ENCODE measurements at regions of chr19 and their contacts with region 1.

Region 1: GRCh38 chr19:1249298-1249989 is 1.1 kb downstream of the MIDN start:
- DNase-seq: peak; percentile 92 to 98
- ATAC-seq: peak; percentile 45 to 76 (median 57)
- H3K4me3 ChIP-seq: peak overlapping the region; percentile 88
- H3K4me3 Mint-ChIP-seq: peak overlapping the region; percentile 91
- H3K27ac ChIP-seq: peak overlapping the region; percentile 93
- H3K27ac Mint-ChIP-seq: peak overlapping the region; percentile 88 to 97
- H3K4me1 ChIP-seq: peaks cover 48% of the 10 kb centered on the region
- H3K4me1 Mint-ChIP-seq: peaks cover 3 to 25% of the 10 kb centered on the region in 2 donors
- H3K27me3 ChIP-seq: no peaks in the 10 kb centered on the region
- H3K27me3 Mint-ChIP-seq: no peaks in the 10 kb centered on the region
- CTCF ChIP-seq: no peak

Region 2: GRCh38 chr19:1020868-1021425 is 228.5 kb before region 1 on chr19 and contains the start of gene TMEM259:
- intact Hi-C with region 1: loop called (anchors 5 kb)
- DNase-seq: peak; percentile 97 to 98
- ATAC-seq: peak; percentile 88 to 98 (median 88)
- H3K4me3 ChIP-seq: peak within 1 kb of the TSS; percentile 94
- H3K4me3 Mint-ChIP-seq: peak within 1 kb of the TSS; percentile 92
- H3K27ac ChIP-seq: peak within 1 kb of the TSS; percentile 100
- H3K27ac Mint-ChIP-seq: peak within 1 kb of the TSS; percentile 100
- H3K4me1 ChIP-seq: peaks cover 66% of the 10 kb centered on the region
- H3K4me1 Mint-ChIP-seq: peaks cover 24 to 49% of the 10 kb centered on the region in 2 donors
- H3K27me3 ChIP-seq: no peaks in the 10 kb centered on the region
- H3K27me3 Mint-ChIP-seq: peaks cover 0 to 3% of the 10 kb centered on the region in 2 donors
- CTCF ChIP-seq: no peak
- total RNA-seq, gene TMEM259: 310 to 354 (median 317) TPM

Region 3: DNA sequence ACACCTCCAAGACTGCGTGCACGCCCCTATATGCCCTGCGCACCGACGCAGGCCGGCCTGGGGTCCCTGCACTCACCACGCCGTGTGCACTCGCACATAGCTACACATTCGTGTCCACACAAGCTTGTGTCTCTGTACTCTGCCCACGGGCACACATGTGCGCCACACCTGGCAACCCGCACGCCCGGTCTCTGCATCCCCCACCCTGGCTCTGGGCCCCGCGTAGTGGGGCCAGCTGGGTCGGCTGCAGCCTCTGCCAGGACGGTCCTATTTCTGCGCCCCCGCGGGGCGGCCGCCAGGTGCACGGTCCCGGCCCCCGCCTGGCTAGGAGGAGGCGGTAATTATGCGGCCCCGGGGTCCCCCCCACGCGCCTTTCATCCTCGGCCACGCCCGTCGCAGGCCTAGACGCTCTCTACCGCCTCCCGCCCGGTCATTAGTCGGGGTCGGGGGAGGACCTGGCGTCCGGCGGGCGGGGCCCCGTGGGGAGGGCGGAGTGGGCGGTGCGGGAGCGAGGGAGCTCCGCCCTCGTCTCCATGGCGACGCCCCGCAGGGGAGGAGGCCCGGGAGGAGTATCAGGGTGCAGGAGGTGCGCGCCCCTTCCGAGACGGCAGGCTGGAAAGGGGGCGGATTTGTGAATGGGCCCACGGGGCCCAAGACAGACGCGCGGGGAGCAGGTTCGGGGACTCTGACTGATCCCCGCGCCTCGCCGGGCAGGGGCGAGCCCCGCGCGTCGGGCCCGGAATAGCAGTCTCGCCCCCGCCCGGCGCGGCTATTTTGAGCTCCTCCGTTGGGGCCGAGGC is 16.9 kb after region 1 on chr19:
- intact Hi-C with region 1: loop called (anchors 1 kb)
- DNase-seq: peak; percentile 89 to 91
- ATAC-seq: peak; percentile 41 to 66 (median 53)
- H3K4me3 ChIP-seq: peak overlapping the region; percentile 28
- H3K4me3 Mint-ChIP-seq: peak overlapping the region; percentile 72
- H3K27ac ChIP-seq: peak overlapping the region; percentile 70
- H3K27ac Mint-ChIP-seq: peak overlapping the region; percentile 21 to 97
- H3K4me1 ChIP-seq: peaks cover 83% of the 10 kb centered on the region
- H3K4me1 Mint-ChIP-seq: peaks cover 53 to 67% of the 10 kb centered on the region in 2 donors
- H3K27me3 ChIP-seq: no peaks in the 10 kb centered on the region
- H3K27me3 Mint-ChIP-seq: no peaks in the 10 kb centered on the region
- CTCF ChIP-seq: no peak